Mammary epithelial cell (primary cell): ENCODE measurements at regions of chr9 and their contacts with region 1.

Region 1: DNA sequence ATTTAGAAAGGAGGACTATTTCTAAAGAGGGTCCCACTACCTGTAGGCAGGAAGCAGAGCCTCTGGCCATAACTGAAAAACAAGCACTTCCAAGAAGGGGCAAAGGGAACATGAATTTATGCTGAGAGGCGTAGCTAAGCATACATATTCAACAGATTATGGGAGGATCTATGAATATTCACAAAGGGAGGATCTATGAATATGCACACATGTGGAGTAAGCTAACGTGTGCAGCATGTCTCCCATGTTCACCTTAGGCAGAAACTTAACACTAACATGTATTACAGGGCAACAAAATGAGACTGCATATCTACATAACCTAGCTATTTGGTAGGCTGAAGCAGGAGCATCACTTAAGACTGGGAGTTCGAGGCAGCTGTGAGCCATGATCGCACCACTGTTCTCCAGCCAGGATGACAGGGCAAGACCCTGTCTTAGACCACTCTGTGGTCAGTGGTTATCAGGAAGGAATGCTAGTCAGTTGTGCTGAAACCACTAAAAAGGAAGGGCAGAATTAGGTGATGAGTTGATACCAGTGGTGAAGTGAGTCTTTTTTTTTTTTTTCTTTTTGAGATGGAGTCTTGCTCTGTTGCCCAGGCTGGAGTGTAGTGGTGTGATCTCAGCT is 20.8 kb downstream of the FXN start:
- DNase-seq: no peak
- H3K4me3 ChIP-seq: no peak overlapping the region
- H3K27ac ChIP-seq: no peak overlapping the region
- H3K4me1 ChIP-seq: no peaks in the 10 kb centered on the region
- H3K27me3 ChIP-seq: no peaks in the 10 kb centered on the region
- CTCF ChIP-seq: no peak

Region 2: GRCh38 chr9:69104830-69105527 is 48.7 kb after region 1 on chr9:
- CTCF ChIA-PET with region 1: no interaction called
- dilution Hi-C with region 1: no loop called
- in situ Hi-C with region 1: no loop called
- intact Hi-C with region 1: no loop called
- DNase-seq: peak; percentile 70
- H3K4me3 ChIP-seq: no peak overlapping the region
- H3K27ac ChIP-seq: no peak overlapping the region
- H3K4me1 ChIP-seq: peaks cover 7% of the 10 kb centered on the region
- H3K27me3 ChIP-seq: no peaks in the 10 kb centered on the region
- CTCF ChIP-seq: no peak

Region 3: DNA sequence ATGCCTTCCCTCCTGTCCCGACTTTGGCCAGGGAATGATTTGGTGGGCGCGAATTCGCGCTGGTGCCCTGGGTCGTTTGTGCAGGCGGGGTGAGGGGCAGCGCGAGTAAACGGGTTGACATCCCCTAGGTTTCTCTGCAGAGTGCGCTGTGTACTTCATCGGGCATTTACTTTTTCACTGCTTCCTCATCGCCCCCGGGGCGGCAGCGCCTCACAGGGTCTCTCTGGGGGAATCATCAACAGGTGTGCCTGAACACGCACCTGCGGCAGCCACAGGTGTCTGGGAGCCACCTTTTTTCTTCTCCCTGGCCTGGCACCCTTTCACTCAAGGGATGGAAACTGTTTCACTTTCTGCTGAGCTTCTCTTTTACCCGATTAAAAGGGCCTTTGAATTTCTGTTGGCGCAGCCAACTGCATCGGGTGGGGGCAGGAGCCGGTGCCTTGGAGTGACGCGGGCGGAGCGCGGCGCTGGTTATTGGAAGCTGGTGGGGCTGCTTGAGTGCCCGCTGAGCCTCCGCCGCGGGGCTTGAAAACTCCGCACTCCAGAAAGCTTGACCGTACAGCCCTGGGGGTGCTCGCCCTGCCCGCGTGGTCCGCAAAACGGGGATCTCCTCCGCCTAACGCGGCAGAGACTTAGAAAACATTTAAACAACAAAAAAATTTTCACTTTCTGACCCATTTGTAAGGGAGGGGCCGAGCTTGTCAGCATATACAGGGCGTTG is 65.7 kb after region 1 on chr9:
- CTCF ChIA-PET with region 1: no interaction called
- dilution Hi-C with region 1: no loop called
- in situ Hi-C with region 1: no loop called
- intact Hi-C with region 1: loop called (anchors 1 kb)
- DNase-seq: peak; percentile 67
- H3K4me3 ChIP-seq: peak overlapping the region; percentile 43 to 83 (median 81)
- H3K27ac ChIP-seq: peak overlapping the region; percentile 57
- H3K4me1 ChIP-seq: peaks cover 12% of the 10 kb centered on the region
- H3K27me3 ChIP-seq: no peaks in the 10 kb centered on the region
- CTCF ChIP-seq: peak in 1 of 2 donors; percentile 15

Region 4: DNA sequence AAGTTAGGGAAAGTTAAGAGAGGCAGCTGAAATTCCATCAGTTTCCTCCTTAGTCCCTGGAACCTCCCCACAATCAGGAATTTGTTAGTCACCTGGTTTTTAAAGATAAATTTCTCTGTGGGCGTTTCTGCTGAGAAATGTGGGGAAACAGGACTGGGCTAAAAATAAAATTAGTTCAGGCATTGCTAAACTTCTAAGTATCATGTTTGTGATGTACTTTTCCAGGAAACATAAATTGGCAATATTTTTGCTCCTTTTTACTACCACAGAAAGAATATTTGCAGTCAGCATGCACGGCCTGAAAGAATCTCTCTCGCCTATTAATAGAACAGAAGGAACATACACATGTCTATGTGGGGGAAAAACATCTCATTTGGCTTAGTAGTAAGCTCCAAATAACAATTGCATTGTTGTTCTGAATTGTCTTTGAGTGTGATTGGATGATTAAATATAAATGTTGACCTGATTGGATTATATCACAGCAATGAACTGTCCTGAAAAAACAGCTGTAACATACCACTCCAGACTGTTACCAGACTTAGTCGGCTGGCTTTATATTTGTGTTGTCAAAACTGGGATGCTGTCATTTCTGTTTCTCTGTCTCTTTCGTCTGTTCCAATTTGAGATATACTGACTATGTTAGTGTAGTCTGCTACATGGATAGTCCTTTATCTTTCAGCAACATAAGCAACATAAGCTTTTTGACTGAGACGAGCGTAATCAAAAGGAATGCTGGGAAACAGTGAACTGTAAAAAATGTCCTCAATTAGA is 130.7 kb after region 1 on chr9:
- CTCF ChIA-PET with region 1: no interaction called
- dilution Hi-C with region 1: no loop called
- in situ Hi-C with region 1: loop called in 1 of 2 experiments (anchors 5 kb)
- intact Hi-C with region 1: no loop called
- DNase-seq: peak; percentile 62
- H3K4me3 ChIP-seq: no peak overlapping the region
- H3K27ac ChIP-seq: peak overlapping the region; percentile 75
- H3K4me1 ChIP-seq: peaks cover 24% of the 10 kb centered on the region
- H3K27me3 ChIP-seq: no peaks in the 10 kb centered on the region
- CTCF ChIP-seq: no peak

Region 5: DNA sequence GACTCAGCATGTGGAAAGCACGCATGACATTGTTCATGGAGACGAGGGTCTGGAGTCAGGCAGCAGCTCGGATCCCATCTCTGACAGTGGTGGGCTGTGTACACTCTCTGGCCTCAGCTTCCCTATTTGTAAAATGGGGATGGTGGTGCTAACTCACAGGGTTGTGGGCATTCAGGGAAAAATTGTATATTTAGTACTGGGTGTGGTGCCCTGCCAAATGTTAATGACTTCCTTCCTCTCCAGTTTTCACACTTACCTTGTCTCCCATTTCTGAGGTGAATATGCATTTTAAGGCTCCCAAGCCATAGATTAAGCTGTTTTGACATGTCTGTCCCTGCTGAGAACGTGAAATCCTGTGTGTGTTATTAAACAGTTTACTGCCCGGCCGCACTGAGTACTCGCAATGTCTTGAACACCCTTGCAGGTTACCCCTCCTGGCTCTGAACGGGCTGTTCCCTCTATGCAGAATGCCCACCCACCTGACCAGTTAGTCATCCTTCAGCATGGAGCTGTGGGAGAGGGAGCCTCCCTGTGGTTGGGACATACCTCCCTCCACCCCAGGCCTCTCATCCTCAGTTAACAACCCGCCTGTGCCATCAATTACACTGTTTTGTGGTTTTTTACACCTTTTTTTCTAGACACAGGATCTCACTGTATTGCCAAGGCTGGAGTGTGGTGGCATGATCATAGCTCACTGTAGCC is 143.6 kb after region 1 on chr9:
- CTCF ChIA-PET with region 1: no interaction called
- dilution Hi-C with region 1: no loop called
- in situ Hi-C with region 1: loop called in 1 of 2 experiments (anchors 5 kb)
- intact Hi-C with region 1: no loop called
- DNase-seq: peak; percentile 80
- H3K4me3 ChIP-seq: no peak overlapping the region
- H3K27ac ChIP-seq: no peak overlapping the region
- H3K4me1 ChIP-seq: peaks cover 21% of the 10 kb centered on the region
- H3K27me3 ChIP-seq: no peaks in the 10 kb centered on the region
- CTCF ChIP-seq: peak in 1 of 2 donors; percentile 41